CD14-positive monocyte (primary cell): ENCODE measurements at regions of chr17 and their contacts with region 1.

Region 1: DNA sequence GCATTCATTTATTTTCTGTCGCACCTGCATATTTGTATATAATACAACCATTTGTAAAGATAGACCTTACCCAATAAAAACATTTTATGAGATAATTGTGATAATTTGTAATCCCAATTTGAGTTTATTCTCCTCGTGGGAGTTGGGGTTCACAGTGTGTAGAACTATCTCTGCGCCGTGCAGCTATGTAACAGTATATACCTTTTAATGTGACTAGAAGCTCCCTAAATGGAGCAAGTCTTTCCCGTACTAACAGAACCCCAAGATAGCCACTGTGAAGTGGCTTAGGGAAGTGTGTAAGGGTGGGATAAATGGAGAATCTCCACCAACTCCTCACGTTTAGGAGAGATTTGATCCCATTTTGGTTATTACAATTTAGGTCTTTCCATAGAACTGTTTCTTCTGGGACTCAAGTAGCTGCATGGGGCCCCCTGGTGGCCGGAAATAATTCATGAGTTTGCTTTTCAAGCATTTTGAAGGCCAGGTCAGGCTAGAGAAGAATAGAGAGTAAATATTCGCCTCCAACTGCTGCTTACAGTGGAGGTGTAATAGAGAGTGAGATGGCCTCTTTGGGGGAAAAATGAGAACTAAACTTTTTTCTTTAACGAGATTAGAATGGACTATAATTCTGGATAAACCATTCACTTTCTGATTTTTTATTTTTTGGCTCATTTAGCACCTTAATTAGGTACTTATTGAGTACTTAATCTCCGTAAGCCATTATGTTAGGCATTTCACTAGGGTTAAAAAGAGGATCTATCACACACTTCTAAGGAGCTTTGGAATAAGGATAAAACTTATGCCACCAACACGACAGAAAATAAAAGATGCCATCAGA is 4.5 kb downstream of the TMEM100 start:
- DNase-seq: peak; percentile 57 to 72 (median 67)
- H3K4me3 ChIP-seq: no peak overlapping the region
- H3K4me3 Mint-ChIP-seq: no peak overlapping the region
- H3K27ac ChIP-seq: no peak overlapping the region
- H3K27ac Mint-ChIP-seq: no peak overlapping the region
- H3K4me1 ChIP-seq: peaks cover 5 to 8% of the 10 kb centered on the region in 2 donors
- H3K4me1 Mint-ChIP-seq: peaks cover 12% of the 10 kb centered on the region
- H3K27me3 ChIP-seq: peaks cover 13 to 15% of the 10 kb centered on the region in 2 donors
- H3K27me3 Mint-ChIP-seq: peaks cover 10 to 21% (median 19%) of the 10 kb centered on the region in 3 donors
- CTCF ChIP-seq: peak; percentile 89

Region 2: GRCh38 chr17:55641676-55642081 is 76.4 kb before region 1 on chr17:
- intact Hi-C with region 1: loop called (anchors 10 kb)
- DNase-seq: peak; percentile 50 to 62 (median 60)
- H3K4me3 ChIP-seq: no peak overlapping the region
- H3K4me3 Mint-ChIP-seq: no peak overlapping the region
- H3K27ac ChIP-seq: no peak overlapping the region
- H3K27ac Mint-ChIP-seq: no peak overlapping the region
- H3K4me1 ChIP-seq: peaks cover 26 to 29% of the 10 kb centered on the region in 2 donors
- H3K4me1 Mint-ChIP-seq: peaks cover 26% of the 10 kb centered on the region
- H3K27me3 ChIP-seq: no peaks in the 10 kb centered on the region
- H3K27me3 Mint-ChIP-seq: peaks cover 0 to 2% (median 2%) of the 10 kb centered on the region in 3 donors
- CTCF ChIP-seq: peak; percentile 76

Region 3: DNA sequence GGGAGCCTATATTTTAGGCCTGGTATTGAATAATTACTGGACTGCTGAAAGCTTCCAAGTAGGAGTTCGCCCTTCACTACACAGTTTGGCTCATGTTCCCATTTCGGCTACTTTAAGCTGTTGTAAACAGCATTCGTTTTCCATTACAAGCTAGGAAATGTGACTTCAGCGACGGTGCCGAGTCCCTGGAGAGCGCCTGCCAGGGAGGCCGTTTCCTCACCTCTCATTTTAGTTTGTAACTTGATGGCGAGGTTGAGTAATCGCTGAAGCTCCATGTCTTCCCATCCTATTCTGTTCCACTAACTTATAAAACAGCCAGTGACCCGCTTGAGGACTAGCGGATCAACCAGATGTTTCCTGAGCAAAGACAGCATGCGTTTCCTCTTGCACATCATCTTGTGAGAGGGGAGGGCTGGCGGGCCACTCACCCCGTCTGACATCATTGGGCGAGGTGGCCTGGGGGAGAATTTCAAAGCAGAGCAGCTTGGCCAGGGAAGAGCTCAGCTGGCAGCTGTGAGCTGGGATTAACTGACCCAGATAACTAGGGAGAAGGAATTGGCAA is 65.6 kb after region 1 on chr17:
- intact Hi-C with region 1: no loop called
- DNase-seq: peak in 1 of 3 donors; percentile 45
- H3K4me3 ChIP-seq: no peak overlapping the region
- H3K4me3 Mint-ChIP-seq: peak overlapping the region in 1 of 2 donors; percentile 13
- H3K27ac ChIP-seq: no peak overlapping the region
- H3K27ac Mint-ChIP-seq: peak overlapping the region in 1 of 7 donors; percentile 1
- H3K4me1 ChIP-seq: no peaks in the 10 kb centered on the region
- H3K4me1 Mint-ChIP-seq: peaks cover 11% of the 10 kb centered on the region
- H3K27me3 ChIP-seq: no peaks in the 10 kb centered on the region
- H3K27me3 Mint-ChIP-seq: no peaks in the 10 kb centered on the region
- CTCF ChIP-seq: no peak

Region 4: GRCh38 chr17:55825213-55825612 is 107.1 kb after region 1 on chr17:
- intact Hi-C with region 1: no loop called
- DNase-seq: no peak
- H3K4me3 ChIP-seq: no peak overlapping the region
- H3K4me3 Mint-ChIP-seq: no peak overlapping the region
- H3K27ac ChIP-seq: no peak overlapping the region
- H3K27ac Mint-ChIP-seq: no peak overlapping the region
- H3K4me1 ChIP-seq: no peaks in the 10 kb centered on the region
- H3K4me1 Mint-ChIP-seq: no peaks in the 10 kb centered on the region
- H3K27me3 ChIP-seq: no peaks in the 10 kb centered on the region
- H3K27me3 Mint-ChIP-seq: no peaks in the 10 kb centered on the region
- CTCF ChIP-seq: no peak